Posterior cingulate gyrus (tissue), 11 donors: ENCODE measurements at regions of chr1 and their contacts with region 1.

Region 1: DNA sequence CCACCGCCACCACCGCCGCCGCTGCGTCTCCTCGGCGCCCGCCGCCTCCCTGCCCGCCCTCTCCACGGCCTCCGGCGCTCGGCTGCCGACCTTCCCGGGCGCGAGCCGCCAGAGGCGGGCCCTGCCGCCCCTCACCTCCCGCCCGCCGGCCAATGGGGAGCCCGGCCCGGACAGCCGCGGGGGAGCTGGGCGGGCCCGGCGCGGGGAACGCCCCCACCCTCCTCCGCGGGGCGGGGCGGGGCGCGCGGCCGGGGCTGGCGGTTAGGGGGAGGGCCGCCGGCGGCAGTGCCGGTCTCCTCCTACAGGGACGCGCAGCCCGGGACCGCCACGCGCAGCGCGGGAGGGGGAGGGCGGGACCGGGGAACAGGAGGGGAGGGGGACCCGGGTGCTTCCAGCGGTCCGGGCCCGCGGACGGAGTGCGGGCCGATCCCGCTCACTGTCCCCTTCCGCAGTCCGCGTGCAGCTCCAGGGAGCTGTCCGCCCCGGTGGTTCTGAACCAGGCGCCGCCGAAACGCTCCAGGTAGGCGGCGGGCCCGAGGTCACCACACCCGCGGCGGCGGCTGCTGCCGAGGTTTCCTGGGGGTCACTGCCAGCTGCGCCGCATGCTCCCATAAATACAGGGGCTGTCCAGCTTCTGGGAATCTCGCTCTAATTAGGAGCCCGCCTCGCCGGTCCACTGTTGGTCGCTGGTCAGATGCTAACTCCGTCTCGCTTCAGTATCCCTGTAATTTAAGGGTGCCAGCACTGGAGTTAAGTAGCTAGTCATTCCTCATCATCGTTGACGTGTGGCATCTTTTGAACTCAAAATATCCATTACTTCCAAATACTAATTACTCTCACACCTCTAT is at the start of gene PGBD5:
- DNase-seq: peak; percentile 71 to 98 (median 85)

Region 2: GRCh38 chr1:230359992-230360668 is 66.3 kb before region 1 on chr1:
- intact Hi-C with region 1: loop called (anchors 5 kb)
- DNase-seq: peak in 1 of 10 donors; percentile 26

Region 3: DNA sequence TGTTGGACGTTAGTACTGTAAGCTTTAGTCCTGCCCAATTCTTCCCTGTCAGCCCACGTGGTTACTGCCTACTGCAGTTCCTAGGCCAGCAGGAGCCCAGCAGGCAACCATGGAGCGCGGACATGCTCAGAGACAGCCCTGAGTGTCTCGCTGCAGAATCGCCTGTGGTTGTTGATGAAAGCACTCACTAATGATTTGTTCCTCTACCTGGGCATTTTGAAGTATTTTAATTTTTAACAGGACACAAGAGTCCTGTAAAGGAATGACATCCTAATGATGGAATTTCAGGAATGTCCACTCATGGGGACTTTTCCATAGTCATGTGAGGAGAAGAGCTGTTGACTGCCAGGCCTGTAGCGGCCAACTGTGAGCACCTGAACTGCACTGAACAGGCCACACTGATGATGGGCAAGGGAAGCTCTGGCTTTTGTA is 44.4 kb before region 1 on chr1:
- intact Hi-C with region 1: no loop called
- DNase-seq: peak in 2 of 10 donors; percentile 40 to 90